ENCODE measurements at regions of chr11 and their contacts with region 1.

Region 1: DNA sequence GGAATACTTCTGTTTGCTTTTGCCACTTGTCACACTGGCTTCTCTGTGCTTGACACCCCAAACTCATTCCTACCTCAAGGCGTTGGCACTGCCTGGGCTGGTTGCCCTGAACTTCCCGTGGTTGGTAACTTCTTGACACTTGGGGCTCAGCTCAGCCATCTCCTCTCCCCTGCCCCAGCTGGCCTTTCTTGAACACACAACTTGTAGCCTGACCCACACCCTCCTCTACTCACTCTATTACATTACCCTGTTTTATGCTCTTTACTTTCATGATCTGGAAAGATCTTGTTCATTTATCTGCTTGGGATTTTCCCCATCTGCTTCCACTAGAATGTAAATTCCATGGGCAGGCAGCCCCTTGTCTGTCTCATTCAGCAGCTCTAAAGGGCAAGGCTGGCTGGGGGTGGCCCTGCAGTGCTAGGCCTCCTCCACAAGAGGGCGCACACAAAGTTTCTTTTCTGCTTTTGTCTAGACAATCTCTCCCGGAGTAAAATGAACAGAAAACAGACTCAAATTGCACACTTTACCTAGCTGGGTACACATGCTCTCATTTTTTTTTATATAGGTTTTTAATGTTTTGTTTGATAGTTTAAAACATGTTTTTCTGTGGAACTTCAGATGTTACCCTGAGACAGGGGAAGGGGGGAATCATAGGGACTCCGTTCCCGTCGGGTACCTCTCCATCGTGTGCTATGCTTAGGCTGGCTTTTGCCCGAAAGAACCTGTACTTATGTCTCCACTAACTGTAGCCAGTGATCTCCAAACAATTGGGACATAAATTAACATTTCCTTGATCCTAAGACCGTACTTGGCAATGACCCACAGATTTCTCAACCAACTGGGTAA is 16.4 kb upstream of the MRGPRX2 start:
- DNase-seq: no peak
- H3K4me3 ChIP-seq: no peak overlapping the region
- H3K27ac ChIP-seq: no peak overlapping the region
- H3K27me3 ChIP-seq: peaks cover 13% of the 10 kb centered on the region
- CTCF ChIP-seq: peak; percentile 99

Region 2: GRCh38 chr11:19055016-19055415 is 22.0 kb before region 1 on chr11:
- CTCF ChIA-PET with region 1: interaction called, 39 read pairs
- POLR2A ChIA-PET with region 1: no interaction called
- DNase-seq: no peak
- H3K4me3 ChIP-seq: no peak overlapping the region
- H3K27ac ChIP-seq: no peak overlapping the region
- H3K27me3 ChIP-seq: peaks cover 8% of the 10 kb centered on the region
- CTCF ChIP-seq: no peak

Region 3: DNA sequence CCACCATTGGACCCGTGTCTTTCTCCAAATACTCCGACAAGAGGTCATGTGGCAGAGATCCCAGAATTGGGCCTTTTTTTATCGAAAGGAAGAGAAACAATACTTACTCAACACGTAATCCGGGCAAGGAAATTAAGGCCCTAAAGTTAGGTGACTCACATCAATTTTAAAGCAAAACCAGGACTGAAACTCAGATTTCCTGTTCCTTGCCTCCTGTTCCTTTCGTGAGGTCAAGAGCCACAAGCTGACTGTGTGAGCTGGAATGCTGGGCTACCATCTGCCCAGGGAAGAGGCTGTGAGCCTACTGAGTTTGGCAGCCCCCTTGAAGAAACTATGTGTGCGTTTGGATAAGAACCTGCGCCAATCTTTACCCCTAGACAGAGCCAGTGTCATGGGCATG is 10.7 kb after region 1 on chr11:
- CTCF ChIA-PET with region 1: interaction called, 34 read pairs
- POLR2A ChIA-PET with region 1: no interaction called
- DNase-seq: no peak
- H3K4me3 ChIP-seq: no peak overlapping the region
- H3K27ac ChIP-seq: no peak overlapping the region
- H3K27me3 ChIP-seq: peaks cover 5% of the 10 kb centered on the region
- CTCF ChIP-seq: no peak

Region 4: GRCh38 chr11:19116971-19117750 is 40.2 kb after region 1 on chr11 and contains the start of gene ZDHHC13:
- CTCF ChIA-PET with region 1: interaction called, 26 read pairs
- POLR2A ChIA-PET with region 1: no interaction called
- DNase-seq: peak; percentile 70
- H3K4me3 ChIP-seq: peak within 1 kb of the TSS; percentile 80
- H3K27ac ChIP-seq: peak within 1 kb of the TSS; percentile 21
- H3K27me3 ChIP-seq: peaks cover 11% of the 10 kb centered on the region
- CTCF ChIP-seq: peak; percentile 55
- polyA plus RNA-seq, gene ZDHHC13: 10.5 and 15.4 TPM in 2 replicates

Region 5: DNA sequence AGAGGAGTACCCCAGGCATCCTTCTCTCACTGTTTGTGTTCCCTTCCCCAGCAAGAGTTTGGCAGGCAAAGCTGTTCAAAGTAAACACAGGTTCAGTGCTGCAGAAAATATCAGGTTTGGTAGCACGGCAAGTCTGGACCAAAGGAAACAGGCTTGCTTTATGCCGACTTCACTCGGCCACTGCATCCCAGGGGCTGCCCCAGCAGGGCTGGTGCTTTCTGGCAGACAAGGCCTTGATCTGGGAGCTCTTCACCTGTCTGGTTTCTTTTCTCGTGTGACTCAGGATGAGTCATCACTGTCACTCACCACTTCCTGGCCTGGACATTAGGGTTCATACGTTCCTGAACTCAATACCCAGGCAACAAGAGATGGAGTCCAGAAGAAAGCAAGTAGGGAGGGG is 583.1 kb after region 1 on chr11:
- CTCF ChIA-PET with region 1: no interaction called
- POLR2A ChIA-PET with region 1: no interaction called
- DNase-seq: no peak
- H3K4me3 ChIP-seq: no peak overlapping the region
- H3K27ac ChIP-seq: no peak overlapping the region
- H3K27me3 ChIP-seq: no peaks in the 10 kb centered on the region
- CTCF ChIP-seq: no peak

Measured in AG04450 (cell line).